Common myeloid progenitor, CD34-positive (primary cell): ENCODE measurements at regions of chr6 and their contacts with region 1.

Region 1: GRCh38 chr6:152701081-152701862 is 3.6 kb downstream of the MYCT1 start:
- DNase-seq: peak in 2 of 3 donors; percentile 47 to 58
- H3K4me3 ChIP-seq: peak overlapping the region in 5 of 7 experiments; percentile 66 to 89 (median 80)
- H3K27ac ChIP-seq: peak overlapping the region; percentile 96 to 97
- H3K4me1 ChIP-seq: peaks cover 4 to 51% (median 12%) of the 10 kb centered on the region in 4 experiments
- H3K27me3 ChIP-seq: no peaks in the 10 kb centered on the region

Region 2: DNA sequence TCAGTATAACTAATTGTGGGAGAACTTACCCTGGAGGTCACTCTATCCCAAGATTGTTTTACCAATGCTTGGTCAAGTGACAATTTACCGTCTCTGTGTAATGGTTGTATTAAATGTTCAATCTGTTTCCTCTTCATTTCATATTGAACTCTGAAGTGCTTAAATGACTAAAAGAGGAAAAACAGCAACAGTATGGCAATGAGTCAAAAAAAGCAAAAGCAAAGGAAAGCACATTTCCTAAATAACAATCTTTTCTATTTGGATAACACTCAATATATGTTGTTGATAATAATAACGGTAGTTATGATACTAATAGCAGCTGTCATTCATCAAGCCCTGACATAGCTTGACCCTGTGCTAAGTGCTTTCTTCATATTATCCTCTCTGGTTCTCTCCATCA is 216.5 kb before region 1 on chr6:
- CTCF ChIA-PET with region 1: interaction called, 10 read pairs
- POLR2A ChIA-PET with region 1: no interaction called
- DNase-seq: no peak
- H3K4me3 ChIP-seq: no peak overlapping the region
- H3K27ac ChIP-seq: no peak overlapping the region
- H3K4me1 ChIP-seq: no peaks in the 10 kb centered on the region
- H3K27me3 ChIP-seq: no peaks in the 10 kb centered on the region

Region 3: GRCh38 chr6:152720974-152721373 is 19.7 kb after region 1 on chr6:
- CTCF ChIA-PET with region 1: interaction called, 39 read pairs
- POLR2A ChIA-PET with region 1: interaction called, 4 read pairs
- DNase-seq: peak in 1 of 3 donors; percentile 39
- H3K4me3 ChIP-seq: no peak overlapping the region
- H3K27ac ChIP-seq: no peak overlapping the region
- H3K4me1 ChIP-seq: peaks cover 0 to 12% (median 4%) of the 10 kb centered on the region in 4 experiments
- H3K27me3 ChIP-seq: no peaks in the 10 kb centered on the region